Ascending aorta (tissue), 2 donors: ENCODE measurements at regions of chr11 and their contacts with region 1.

Region 1: GRCh38 chr11:101127699-101128570 is 1.7 kb downstream of the PGR start:
- DNase-seq: peak in 1 of 2 donors; percentile 73
- H3K4me3 ChIP-seq: peak overlapping the region; percentile 77 to 87
- H3K27ac ChIP-seq: peak overlapping the region; percentile 92 to 93
- H3K4me1 ChIP-seq: peaks cover 5 to 11% of the 10 kb centered on the region in 2 donors
- H3K27me3 ChIP-seq: no peaks in the 10 kb centered on the region
- CTCF ChIP-seq: peak in 2 of 3 experiments; percentile 6 to 17

Region 2: DNA sequence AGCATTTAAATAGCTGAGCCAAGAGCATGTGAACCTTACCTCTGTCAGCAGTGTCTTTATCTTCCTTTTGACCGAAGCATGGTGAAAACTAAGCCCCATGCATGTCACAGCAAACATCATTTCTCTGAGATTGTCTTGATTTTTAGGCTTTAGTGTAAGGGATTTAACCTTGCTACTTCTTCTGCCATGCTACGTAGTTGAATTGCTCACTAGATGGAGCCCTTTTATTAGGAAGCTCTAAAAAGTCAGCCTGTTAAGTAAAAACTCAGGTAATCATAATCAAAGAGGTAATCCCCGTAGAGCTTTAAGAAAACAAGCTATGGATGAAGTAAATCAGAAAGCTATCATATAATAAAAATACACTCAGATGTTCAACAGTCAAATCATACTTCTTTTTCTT is 147.8 kb before region 1 on chr11:
- intact Hi-C with region 1: loop called (anchors 5 kb)
- DNase-seq: no peak
- H3K4me3 ChIP-seq: no peak overlapping the region
- H3K27ac ChIP-seq: no peak overlapping the region
- H3K4me1 ChIP-seq: no peaks in the 10 kb centered on the region
- H3K27me3 ChIP-seq: no peaks in the 10 kb centered on the region
- CTCF ChIP-seq: peak in 2 of 3 experiments; percentile 37 to 67

Region 3: DNA sequence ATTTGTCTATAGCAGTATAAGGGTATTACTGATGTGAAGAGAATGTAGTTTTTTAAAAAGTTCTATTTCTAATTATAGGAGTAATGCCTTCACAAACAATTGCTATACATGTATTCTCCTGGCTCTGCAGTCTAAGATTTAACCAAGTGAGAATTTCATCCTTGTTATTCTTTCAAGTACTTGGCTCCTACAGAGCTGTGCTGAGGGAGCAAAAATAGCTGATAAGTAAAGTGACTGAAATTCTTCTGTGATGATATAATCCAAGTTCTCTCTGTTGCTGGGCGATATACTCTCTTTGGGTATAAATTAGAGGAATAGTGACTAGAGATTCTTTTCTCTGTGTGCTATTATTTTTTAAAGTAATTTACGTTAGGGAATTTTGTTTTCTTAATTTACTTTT is 66.3 kb before region 1 on chr11:
- intact Hi-C with region 1: loop called (anchors 5 kb)
- DNase-seq: no peak
- H3K4me3 ChIP-seq: no peak overlapping the region
- H3K27ac ChIP-seq: peak overlapping the region in 1 of 2 donors; percentile 31
- H3K4me1 ChIP-seq: peaks cover 0 to 10% of the 10 kb centered on the region in 2 donors
- H3K27me3 ChIP-seq: no peaks in the 10 kb centered on the region
- CTCF ChIP-seq: no peak

Region 4: GRCh38 chr11:101096036-101096704 is 31.8 kb before region 1 on chr11:
- intact Hi-C with region 1: no loop called
- DNase-seq: no peak
- H3K4me3 ChIP-seq: no peak overlapping the region
- H3K27ac ChIP-seq: no peak overlapping the region
- H3K4me1 ChIP-seq: peaks cover 0 to 22% of the 10 kb centered on the region in 2 donors
- H3K27me3 ChIP-seq: no peaks in the 10 kb centered on the region
- CTCF ChIP-seq: no peak

Region 5: DNA sequence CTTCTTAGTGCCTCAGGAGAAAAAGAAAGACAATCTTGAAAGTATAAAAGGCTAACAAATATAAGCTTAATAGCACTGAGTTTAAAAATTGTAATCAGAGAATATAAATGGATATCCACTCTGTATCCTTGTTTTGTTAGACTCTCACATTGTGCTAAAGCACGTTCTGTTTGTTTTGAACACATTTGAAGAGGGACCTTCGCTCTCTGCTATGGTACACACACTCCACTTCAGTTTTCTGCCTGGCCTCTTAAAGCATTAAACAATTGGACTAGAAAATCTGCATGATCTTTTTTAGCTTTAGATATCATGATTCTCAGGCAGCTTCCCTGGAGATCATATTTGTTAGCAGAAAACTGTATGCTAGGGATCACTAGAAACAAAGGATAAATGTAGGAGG is 42.0 kb after region 1 on chr11:
- intact Hi-C with region 1: no loop called
- DNase-seq: no peak
- H3K4me3 ChIP-seq: no peak overlapping the region
- H3K27ac ChIP-seq: no peak overlapping the region
- H3K4me1 ChIP-seq: peaks cover 0 to 2% of the 10 kb centered on the region in 2 donors
- H3K27me3 ChIP-seq: no peaks in the 10 kb centered on the region
- CTCF ChIP-seq: no peak

Region 6: GRCh38 chr11:101187748-101188147 is 59.8 kb after region 1 on chr11:
- intact Hi-C with region 1: loop called (anchors 5 kb)
- DNase-seq: no peak
- H3K4me3 ChIP-seq: peak overlapping the region; percentile 16
- H3K27ac ChIP-seq: peak overlapping the region; percentile 49 to 59
- H3K4me1 ChIP-seq: peaks cover 0 to 19% of the 10 kb centered on the region in 2 donors
- H3K27me3 ChIP-seq: no peaks in the 10 kb centered on the region
- CTCF ChIP-seq: no peak

Region 7: GRCh38 chr11:101341593-101341992 is 213.7 kb after region 1 on chr11:
- intact Hi-C with region 1: loop called (anchors 5 kb)
- DNase-seq: no peak
- H3K4me3 ChIP-seq: no peak overlapping the region
- H3K27ac ChIP-seq: peak overlapping the region; percentile 59 to 76
- H3K4me1 ChIP-seq: peaks cover 0 to 11% of the 10 kb centered on the region in 2 donors
- H3K27me3 ChIP-seq: no peaks in the 10 kb centered on the region
- CTCF ChIP-seq: no peak

Region 8: GRCh38 chr11:101444164-101444563 is 316.2 kb after region 1 on chr11:
- intact Hi-C with region 1: loop called (anchors 5 kb)
- DNase-seq: no peak
- H3K4me3 ChIP-seq: no peak overlapping the region
- H3K27ac ChIP-seq: no peak overlapping the region
- H3K4me1 ChIP-seq: peaks cover 14 to 16% of the 10 kb centered on the region in 2 donors
- H3K27me3 ChIP-seq: no peaks in the 10 kb centered on the region
- CTCF ChIP-seq: no peak

Region 9: GRCh38 chr11:101914738-101915426 is 786.9 kb after region 1 on chr11 and contains the start of gene CEP126:
- intact Hi-C with region 1: loop called (anchors 5 kb)
- DNase-seq: peak; percentile 77 to 98
- H3K4me3 ChIP-seq: peak within 1 kb of the TSS; percentile 46 to 74
- H3K27ac ChIP-seq: peak within 1 kb of the TSS; percentile 86 to 97
- H3K4me1 ChIP-seq: peaks cover 6 to 9% of the 10 kb centered on the region in 2 donors
- H3K27me3 ChIP-seq: no peaks in the 10 kb centered on the region
- CTCF ChIP-seq: peak; percentile 40 to 59 (median 42)
- total RNA-seq, gene CEP126: 7.2 TPM